Mammary epithelial cell (primary cell): ENCODE measurements at regions of chr6 and their contacts with region 1.

Region 1: GRCh38 chr6:27388293-27389197 is at the start of gene ZNF391:
- DNase-seq: peak; percentile 87
- H3K4me3 ChIP-seq: peak within 1 kb of the TSS; percentile 75 to 92 (median 81)
- H3K27ac ChIP-seq: peak within 1 kb of the TSS; percentile 23
- H3K4me1 ChIP-seq: peaks cover 8% of the 10 kb centered on the region
- H3K27me3 ChIP-seq: no peaks in the 10 kb centered on the region
- CTCF ChIP-seq: no peak
- total RNA-seq, gene ZNF391: 6.5 to 10.4 TPM

Region 2: DNA sequence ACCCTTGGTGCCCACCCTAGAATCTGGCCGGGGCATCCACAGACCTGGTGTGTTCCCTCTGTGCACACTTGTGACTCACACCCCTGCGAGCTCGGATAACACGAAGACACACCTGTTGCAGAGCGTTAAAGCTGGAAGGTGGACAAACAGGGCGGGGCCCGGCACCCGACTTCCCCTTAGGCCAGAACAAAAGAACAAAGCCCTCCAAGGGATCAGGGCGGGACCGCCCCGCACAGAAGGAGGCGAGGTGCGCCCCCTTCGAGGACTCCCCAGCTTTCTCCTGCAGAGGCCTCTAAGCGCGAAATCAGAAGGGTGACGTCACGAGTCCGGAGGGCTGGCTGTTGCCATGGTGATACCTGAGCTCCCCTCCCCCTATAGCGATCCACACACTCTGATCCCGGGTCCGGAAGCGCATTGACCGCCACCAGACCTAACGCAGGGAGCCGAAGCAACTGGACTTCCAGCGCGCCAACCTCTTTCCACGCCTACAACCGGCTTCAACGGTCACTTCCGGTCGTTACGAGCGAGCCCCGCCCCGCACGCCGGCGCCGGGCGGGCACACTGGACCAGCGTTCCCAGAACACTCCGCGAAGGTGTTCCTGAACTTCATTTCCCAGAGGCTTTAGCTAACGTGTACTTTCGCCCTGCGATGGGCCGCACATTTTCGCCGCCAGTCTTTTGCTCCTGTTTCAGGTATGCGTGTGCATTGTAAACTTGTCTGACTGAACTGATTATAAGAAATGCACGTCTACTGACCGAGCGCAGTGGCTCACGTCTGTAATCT is 84.3 kb after region 1 on chr6 and contains the start of gene ZNF184:
- CTCF ChIA-PET with region 1: no interaction called
- dilution Hi-C with region 1: no loop called
- in situ Hi-C with region 1: no loop called
- intact Hi-C with region 1: loop called (anchors 1 kb)
- DNase-seq: peak; percentile 99
- H3K4me3 ChIP-seq: peak within 1 kb of the TSS; percentile 59 to 79 (median 63)
- H3K27ac ChIP-seq: peak within 1 kb of the TSS; percentile 86
- H3K4me1 ChIP-seq: peaks cover 6% of the 10 kb centered on the region
- H3K27me3 ChIP-seq: no peaks in the 10 kb centered on the region
- CTCF ChIP-seq: no peak
- total RNA-seq, gene ZNF184: 3.4 to 7.2 TPM

Region 3: GRCh38 chr6:27847706-27848105 is 459.2 kb after region 1 on chr6:
- CTCF ChIA-PET with region 1: no interaction called
- dilution Hi-C with region 1: no loop called
- in situ Hi-C with region 1: no loop called
- intact Hi-C with region 1: no loop called
- DNase-seq: peak; percentile 31
- H3K4me3 ChIP-seq: no peak overlapping the region
- H3K27ac ChIP-seq: no peak overlapping the region
- H3K4me1 ChIP-seq: no peaks in the 10 kb centered on the region
- H3K27me3 ChIP-seq: no peaks in the 10 kb centered on the region
- CTCF ChIP-seq: no peak